GM10248 (cell line): ENCODE measurements at regions of chr14 and their contacts with region 1.

Region 1: DNA sequence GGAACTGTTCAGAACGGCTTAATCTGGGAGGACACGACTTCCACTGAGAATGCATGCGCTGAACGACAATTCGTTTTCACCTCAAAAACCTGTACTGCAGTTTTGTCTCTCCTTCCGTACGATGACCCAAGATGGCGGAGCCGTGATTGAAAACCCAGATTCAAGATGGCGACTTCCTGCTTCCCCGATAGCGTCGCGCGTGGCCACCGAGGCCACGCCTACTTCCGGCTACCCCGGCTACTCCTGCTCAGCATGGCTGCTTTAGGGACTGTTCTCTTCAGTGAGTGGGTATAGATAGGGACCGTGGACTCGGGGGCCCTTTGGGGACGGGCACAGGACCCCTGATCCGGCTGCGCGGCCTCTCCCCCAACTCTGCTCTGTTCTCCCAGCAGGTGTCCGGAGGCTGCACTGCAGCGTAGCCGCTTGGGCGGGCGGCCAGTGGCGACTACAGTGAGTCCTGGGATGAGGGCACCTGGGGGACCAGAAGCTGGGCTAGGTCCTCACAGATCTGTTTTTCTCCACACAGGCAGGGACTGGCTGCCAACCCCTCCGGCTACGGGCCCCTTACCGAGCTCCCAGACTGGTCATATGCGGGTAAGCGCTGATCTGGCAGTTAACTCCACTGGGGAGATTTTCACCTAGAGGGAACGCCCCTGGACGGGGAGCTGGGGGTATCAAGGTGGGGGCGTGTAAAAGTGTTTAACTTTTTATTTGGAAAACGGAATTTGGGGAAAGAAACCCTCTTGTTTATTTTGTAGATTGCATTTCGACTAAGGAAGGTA is at the start of gene MRPL52:
- DNase-seq: peak; percentile 93
- CTCF ChIP-seq: no peak

Region 2: GRCh38 chr14:22811722-22812121 is 18.1 kb before region 1 on chr14:
- CTCF ChIA-PET with region 1: interaction called, 20 read pairs
- POLR2A ChIA-PET with region 1: no interaction called
- DNase-seq: no peak
- CTCF ChIP-seq: no peak

Region 3: DNA sequence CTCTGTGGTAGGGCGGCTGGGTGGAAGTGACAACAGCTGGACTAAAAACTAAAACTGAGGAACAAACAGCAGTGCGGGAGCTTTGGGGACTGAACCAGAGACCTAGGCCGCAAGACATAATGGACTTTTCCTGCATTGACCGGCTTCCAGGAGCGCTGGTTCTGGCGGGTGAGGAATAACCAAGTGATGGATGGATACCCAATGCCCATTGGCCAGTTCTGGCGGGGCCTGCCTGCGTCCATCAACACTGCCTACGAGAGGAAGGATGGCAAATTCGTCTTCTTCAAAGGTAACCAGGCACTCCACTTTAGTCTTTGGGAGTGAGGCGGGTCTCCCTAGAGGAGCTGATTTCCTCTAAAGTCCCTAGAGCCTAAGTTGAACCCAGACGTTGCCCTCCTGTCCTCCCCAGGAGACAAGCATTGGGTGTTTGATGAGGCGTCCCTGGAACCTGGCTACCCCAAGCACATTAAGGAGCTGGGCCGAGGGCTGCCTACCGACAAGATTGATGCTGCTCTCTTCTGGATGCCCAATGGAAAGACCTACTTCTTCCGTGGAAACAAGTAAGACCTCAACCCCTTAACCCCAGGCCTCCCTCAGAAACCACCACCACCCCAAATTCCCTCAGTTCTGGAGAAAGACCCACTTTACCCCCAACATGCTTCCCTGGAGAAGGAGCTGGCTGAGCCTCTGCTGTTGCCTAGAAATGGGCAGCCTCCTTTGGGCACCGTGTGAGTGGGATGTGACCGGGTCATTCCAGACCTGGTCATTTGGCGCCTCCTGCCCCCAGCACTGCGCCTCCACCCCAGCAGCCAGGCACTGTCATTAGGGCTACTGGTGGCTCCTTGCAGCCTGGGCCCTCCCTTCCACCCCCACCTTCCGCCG is 14.6 kb after region 1 on chr14:
- CTCF ChIA-PET with region 1: interaction called, 262 read pairs
- POLR2A ChIA-PET with region 1: no interaction called
- DNase-seq: no peak
- CTCF ChIP-seq: no peak